ENCODE measurements at regions of chr22 and their contacts with region 1.

Region 1: GRCh38 chr22:42437488-42438292 is 5.5 kb upstream of the NFAM1 start:
- DNase-seq: peak; percentile 87
- ATAC-seq: peak; percentile 90
- H3K4me3 ChIP-seq: peak overlapping the region; percentile 46
- H3K27ac ChIP-seq: no peak overlapping the region
- H3K4me1 ChIP-seq: peaks cover 25% of the 10 kb centered on the region
- H3K27me3 ChIP-seq: peaks cover 4% of the 10 kb centered on the region
- CTCF ChIP-seq: peak; percentile 96

Region 2: DNA sequence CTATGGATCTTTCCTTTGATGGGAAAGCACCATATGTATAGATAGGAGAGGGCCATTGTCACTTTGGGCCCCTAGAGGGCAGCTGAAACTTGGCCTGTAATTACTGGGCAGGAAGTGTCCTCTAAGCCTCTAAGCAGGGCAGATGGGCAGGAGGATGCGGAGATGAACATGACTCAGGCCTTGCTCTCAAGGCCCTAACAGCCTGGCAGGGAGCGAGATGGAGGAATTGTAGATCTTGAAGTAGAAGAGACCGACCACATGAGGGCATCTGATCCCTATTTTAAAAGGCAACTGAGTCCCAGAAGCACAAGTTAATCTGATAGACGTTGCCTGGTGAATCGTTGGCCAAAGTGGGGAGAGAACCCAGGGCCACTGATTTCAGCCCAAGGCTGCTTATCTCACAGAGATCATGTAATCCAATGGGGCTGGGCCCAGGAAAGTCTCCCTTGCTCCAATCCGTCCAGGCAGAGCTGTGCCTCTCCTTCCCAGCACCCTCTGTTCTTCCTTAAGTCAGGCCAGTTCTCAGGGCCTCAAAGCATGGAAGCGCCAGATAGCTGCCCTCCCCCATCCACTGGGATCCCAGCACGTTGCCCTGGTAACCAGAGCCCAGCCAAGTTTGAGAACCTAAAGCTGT is 471.0 kb before region 1 on chr22:
- intact Hi-C with region 1: loop called (anchors 10 kb)
- DNase-seq: no peak
- ATAC-seq: peak; percentile 52
- H3K4me3 ChIP-seq: no peak overlapping the region
- H3K27ac ChIP-seq: no peak overlapping the region
- H3K4me1 ChIP-seq: peaks cover 3% of the 10 kb centered on the region
- H3K27me3 ChIP-seq: no peaks in the 10 kb centered on the region
- CTCF ChIP-seq: peak; percentile 35

Region 3: DNA sequence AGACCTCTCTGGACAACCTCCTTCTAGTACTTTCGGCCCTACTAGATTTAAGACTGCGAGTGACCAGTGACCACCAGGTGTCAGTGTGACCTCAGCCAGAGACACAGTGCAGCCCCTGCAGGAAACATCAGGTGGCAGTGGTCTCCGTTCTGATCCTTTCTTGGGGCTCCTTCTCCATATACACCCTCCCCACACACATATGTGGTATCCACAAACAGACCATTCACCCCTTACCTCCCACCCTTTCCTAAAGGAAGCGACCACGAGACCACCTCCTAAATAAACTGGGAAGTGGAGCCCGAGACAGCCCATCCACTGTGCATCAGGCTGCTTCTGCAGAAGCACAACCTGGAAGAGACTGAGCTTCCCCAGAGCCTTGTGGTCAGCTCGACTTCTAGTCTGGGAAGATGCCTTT is 268.6 kb before region 1 on chr22:
- intact Hi-C with region 1: loop called (anchors 10 kb)
- DNase-seq: no peak
- ATAC-seq: peak; percentile 76
- H3K4me3 ChIP-seq: no peak overlapping the region
- H3K27ac ChIP-seq: no peak overlapping the region
- H3K4me1 ChIP-seq: no peaks in the 10 kb centered on the region
- H3K27me3 ChIP-seq: no peaks in the 10 kb centered on the region
- CTCF ChIP-seq: peak; percentile 77

Region 4: GRCh38 chr22:42533638-42533977 is 95.9 kb after region 1 on chr22:
- intact Hi-C with region 1: no loop called
- DNase-seq: no peak
- ATAC-seq: no peak
- H3K4me3 ChIP-seq: no peak overlapping the region
- H3K27ac ChIP-seq: no peak overlapping the region
- H3K4me1 ChIP-seq: peaks cover 6% of the 10 kb centered on the region
- H3K27me3 ChIP-seq: no peaks in the 10 kb centered on the region
- CTCF ChIP-seq: no peak

Measured in upper lobe of right lung (tissue), 1 donor.